ENCODE measurements at regions of chr1 and their contacts with region 1.

Region 1: DNA sequence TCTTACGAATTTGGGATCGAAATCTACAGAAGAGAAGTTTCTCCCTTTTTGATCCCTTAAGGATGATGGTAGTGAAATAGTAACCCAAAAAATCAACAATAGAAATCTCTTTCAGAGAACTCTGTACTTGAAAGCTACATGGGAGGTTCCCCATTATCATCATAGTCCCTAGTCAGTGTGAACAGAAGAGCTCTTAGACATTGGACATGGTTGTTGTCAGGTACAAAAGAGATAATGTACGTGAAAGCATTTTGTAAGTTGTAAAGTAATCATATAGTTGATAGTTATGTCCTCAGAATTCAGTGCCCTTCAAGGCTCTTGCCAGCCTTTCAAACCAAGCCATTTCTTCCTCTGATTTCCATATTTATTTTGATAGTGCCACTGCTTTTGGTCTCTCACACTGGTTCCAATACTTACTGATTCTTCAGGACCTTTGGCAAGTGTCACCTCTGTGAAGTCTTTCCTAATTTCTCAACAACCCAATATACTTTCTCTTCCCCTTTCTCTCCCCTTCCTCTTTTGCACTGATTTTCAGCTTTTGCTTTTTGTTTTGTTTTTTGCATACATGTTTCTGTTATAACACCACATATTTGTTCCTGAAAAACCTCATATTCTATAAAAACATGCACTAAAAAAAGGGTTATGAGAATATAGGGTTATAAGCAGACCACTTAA is 22.4 kb downstream of the VPS45 start:
- DNase-seq: no peak
- H3K4me3 ChIP-seq: no peak overlapping the region
- H3K27ac ChIP-seq: no peak overlapping the region
- H3K4me1 ChIP-seq: peaks cover 0 to 10% of the 10 kb centered on the region in 2 donors
- H3K27me3 ChIP-seq: no peaks in the 10 kb centered on the region
- CTCF ChIP-seq: no peak

Region 2: GRCh38 chr1:149917571-149918144 is 172.3 kb before region 1 on chr1 and contains the start of gene SV2A:
- intact Hi-C with region 1: no loop called
- DNase-seq: peak in 1 of 2 donors; percentile 87
- H3K4me3 ChIP-seq: peak within 1 kb of the TSS; percentile 67 to 87
- H3K27ac ChIP-seq: peak within 1 kb of the TSS; percentile 75 to 78
- H3K4me1 ChIP-seq: peaks cover 0 to 11% of the 10 kb centered on the region in 2 donors
- H3K27me3 ChIP-seq: no peaks in the 10 kb centered on the region
- CTCF ChIP-seq: no peak
- total RNA-seq, gene SV2A: 5.9 TPM

Region 3: GRCh38 chr1:150132372-150132771 is 42.4 kb after region 1 on chr1:
- intact Hi-C with region 1: loop called (anchors 5 kb)
- DNase-seq: no peak
- H3K4me3 ChIP-seq: no peak overlapping the region
- H3K27ac ChIP-seq: no peak overlapping the region
- H3K4me1 ChIP-seq: no peaks in the 10 kb centered on the region
- H3K27me3 ChIP-seq: no peaks in the 10 kb centered on the region
- CTCF ChIP-seq: no peak

Region 4: DNA sequence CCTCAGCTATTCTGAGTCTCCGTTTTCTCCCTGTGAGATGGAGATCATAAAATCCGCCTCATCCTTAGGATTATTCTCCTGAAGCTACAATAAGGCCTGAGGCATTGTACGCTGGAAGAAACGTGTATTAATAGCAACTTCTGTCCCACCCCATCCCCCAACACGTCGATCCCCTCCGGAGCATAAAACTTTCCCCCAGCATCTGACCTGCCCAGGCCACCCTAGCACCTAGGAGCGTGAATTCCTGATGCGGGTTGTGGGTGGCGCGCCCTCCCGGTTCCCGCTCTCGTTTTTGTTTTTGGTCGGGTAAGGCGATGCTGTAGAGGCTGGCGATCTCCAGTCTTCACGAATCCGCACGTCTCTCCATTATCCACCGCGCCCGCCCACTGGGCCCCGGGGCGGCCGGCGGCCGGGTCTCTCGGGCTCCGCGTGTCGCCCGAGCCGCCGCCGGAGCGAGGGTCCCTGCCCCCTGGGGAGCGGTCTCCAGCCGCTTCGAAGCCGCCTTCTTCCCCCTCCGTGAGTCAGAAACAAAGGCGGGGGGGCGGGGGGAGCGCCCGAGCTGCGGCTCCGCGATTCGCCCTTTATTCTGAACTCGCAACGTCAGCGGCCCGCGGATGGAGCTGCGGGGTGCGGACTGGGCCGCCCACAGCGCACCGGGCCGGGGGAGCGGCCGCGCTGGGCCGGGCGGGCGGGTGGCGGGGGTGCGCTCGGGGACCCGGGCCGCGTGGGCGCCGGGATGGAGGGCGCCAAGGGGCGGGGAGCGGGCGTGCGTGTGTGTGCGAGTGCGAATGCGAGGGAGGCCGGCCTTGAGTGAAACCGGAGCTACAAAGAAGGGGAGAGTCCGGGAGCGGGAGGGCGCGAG is 59.5 kb after region 1 on chr1 and contains the start of gene PLEKHO1:
- intact Hi-C with region 1: loop called (anchors 5 kb)
- DNase-seq: peak; percentile 80 to 96
- H3K4me3 ChIP-seq: peak within 1 kb of the TSS; percentile 94 to 95
- H3K27ac ChIP-seq: peak within 1 kb of the TSS; percentile 96 to 97
- H3K4me1 ChIP-seq: peaks cover 8 to 21% of the 10 kb centered on the region in 2 donors
- H3K27me3 ChIP-seq: no peaks in the 10 kb centered on the region
- CTCF ChIP-seq: no peak
- total RNA-seq, gene PLEKHO1: 88.9 TPM

Measured in ascending aorta (tissue), 2 donors.